ENCODE measurements at regions of chr9 and their contacts with region 1.

Region 1: DNA sequence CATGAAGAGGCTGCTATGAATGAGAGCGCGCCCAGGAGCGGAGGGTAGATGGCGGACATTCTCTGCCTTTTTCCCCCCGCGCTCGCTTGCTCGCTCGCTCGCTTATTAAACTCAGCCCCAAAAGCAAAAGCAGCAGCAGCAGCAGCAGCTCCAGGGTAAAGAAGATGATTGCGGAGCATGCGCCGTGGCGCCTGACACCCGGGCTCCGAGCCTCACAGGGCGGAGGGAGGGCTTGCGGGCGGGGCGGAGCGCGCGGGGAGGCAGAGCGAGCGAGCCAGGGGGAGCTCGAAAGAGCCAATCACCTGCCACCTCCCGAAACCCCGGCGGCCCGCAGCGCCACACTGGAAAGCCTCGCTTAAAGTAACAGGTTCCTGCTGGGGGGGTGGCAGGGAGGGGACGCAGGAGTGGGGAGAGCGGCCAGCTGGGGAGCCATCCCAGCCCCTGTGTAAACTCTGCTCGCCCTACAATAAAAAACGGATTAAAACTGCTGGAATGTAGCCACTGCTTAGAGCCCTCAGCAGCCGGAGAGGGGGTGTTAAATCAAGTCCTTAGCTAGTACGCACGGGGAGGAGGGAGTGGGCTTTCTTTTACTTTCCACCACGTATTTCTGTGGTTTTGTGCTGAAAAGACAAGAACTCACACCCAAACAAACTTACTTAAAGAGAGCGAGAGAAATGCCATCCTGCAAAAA is at the start of gene MLLT3:
- DNase-seq: peak; percentile 98
- ATAC-seq: peak; percentile 86
- H3K4me3 Mint-ChIP-seq: peak within 1 kb of the TSS; percentile 98
- H3K27ac Mint-ChIP-seq: peak within 1 kb of the TSS; percentile 99
- H3K4me1 Mint-ChIP-seq: peaks cover 36% of the 10 kb centered on the region
- H3K27me3 Mint-ChIP-seq: no peaks in the 10 kb centered on the region
- total RNA-seq, gene MLLT3: 42.5 to 49.2 TPM

Region 2: GRCh38 chr9:19976226-19976625 is 646.2 kb before region 1 on chr9:
- CTCF ChIA-PET with region 1: no interaction called
- POLR2A ChIA-PET with region 1: no interaction called
- intact Hi-C with region 1: loop called in 1 of 2 experiments (anchors 1 kb)
- DNase-seq: peak; percentile 49
- ATAC-seq: peak; percentile 96
- H3K4me3 Mint-ChIP-seq: no peak overlapping the region
- H3K27ac Mint-ChIP-seq: peak overlapping the region; percentile 88
- H3K4me1 Mint-ChIP-seq: peaks cover 25% of the 10 kb centered on the region
- H3K27me3 Mint-ChIP-seq: peaks cover 2% of the 10 kb centered on the region

Region 3: DNA sequence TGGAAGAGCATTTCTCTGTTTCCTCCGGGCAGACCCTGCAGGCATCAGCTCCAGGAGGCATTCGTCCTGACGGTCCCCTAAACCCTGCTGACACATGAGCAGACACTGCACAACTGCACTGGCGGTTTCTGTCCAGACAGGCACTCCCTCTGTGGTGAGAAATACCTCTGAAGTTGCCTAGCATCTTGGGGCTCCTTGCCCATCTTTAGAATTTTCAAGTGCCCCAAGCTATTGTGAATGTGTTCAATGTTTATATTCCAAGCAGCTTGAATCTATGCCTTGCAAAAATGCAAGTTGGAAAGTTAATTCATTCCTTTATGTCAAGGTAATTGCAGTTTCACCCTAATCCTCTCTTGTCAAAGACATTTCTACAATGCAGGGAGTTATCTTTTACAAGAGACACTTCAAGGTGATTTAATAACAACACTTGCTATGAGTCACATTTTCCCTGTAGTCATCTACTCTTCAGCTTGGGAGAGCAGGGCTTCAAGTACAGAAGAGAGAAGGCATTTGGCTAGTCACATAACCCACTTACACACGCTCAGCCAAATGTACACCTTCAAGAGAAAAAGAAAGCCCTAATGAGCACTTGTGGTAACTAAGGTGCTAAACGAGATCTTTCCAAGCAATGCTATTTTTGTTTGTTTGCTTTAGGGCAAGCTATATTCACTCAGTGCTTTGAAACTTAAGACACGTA is 302.7 kb before region 1 on chr9:
- CTCF ChIA-PET with region 1: no interaction called
- POLR2A ChIA-PET with region 1: interaction called, 3 read pairs
- intact Hi-C with region 1: loop called in 1 of 2 experiments (anchors 2 kb)
- DNase-seq: peak; percentile 52
- ATAC-seq: peak; percentile 74
- H3K4me3 Mint-ChIP-seq: no peak overlapping the region
- H3K27ac Mint-ChIP-seq: peak overlapping the region; percentile 29
- H3K4me1 Mint-ChIP-seq: peaks cover 90% of the 10 kb centered on the region
- H3K27me3 Mint-ChIP-seq: no peaks in the 10 kb centered on the region

Region 4: DNA sequence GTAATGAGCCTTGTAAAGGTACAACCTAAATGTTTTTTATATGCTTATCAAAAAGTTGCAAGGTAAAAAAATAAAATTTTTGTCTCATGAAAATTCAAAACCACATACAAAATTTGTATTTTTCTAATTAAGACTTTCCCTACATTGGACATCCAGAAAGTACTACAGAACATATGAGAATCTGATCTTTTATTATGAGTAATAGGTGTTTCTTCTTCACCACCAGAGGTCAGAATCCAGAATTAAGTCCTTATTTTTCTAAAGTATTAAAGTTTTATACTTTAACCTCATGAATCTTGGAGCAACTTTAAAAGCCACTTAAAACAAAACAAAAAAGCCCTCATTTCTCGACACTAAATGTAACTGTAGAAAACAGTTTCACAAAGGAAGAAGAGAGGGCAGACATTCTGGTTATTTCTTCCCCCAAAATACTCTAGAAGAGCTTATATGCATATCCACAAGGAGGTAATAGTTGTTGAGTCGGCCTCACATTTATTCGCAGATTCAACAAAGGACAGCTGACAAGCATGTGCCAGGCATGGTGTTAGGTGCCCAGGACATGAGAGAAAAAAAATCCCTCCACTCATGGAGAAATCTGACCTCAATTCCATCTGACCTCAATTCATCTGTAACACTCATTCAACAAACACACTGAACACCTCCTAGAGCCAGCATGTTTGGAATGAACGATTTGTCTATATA is 69.5 kb before region 1 on chr9:
- CTCF ChIA-PET with region 1: interaction called, 4 read pairs
- POLR2A ChIA-PET with region 1: interaction called, 9 read pairs
- intact Hi-C with region 1: loop called (anchors 1 to 2 kb)
- DNase-seq: no peak
- ATAC-seq: peak; percentile 37
- H3K4me3 Mint-ChIP-seq: no peak overlapping the region
- H3K27ac Mint-ChIP-seq: peak overlapping the region; percentile 28
- H3K4me1 Mint-ChIP-seq: peaks cover 68% of the 10 kb centered on the region
- H3K27me3 Mint-ChIP-seq: no peaks in the 10 kb centered on the region

Region 5: DNA sequence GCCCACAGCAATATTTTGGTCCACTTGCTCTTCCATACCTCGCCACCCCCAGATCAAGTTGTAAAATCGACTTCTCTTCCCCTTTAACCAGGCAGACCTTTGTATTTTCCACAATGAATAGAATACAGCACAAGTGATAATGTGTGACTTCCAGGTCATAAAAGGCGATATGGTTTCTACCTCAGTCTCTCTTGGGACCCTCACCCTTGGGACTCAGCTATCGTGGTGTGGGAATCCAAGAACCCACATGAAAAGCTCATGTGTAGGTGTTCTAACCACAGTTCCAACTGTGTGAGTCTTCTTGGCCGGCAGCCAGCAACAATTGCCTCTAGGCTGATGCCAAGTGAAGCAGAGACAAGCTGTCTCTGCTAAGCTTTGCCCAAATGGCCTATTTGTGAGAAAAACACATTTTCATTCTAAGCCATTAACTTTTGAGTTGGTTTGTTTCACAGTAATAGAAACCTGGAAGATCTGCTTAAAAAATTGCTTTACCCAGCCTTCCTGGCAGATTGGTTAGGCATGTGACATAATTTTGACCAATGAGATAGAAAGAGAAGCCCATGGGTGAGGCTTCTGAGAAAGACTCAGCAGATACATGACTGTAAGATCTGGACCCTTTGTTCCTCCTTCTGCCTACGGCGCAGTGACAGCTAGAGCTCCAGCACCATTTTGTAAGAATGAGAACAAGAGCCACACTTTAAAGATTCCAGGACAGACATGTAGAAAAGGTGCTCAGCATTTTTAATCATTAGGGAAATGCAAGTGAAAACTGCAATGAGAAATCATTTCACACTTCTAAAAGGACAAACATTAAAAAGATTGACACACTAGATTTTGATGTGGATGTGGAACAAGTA is 18.1 kb after region 1 on chr9:
- CTCF ChIA-PET with region 1: interaction called, 23 read pairs
- POLR2A ChIA-PET with region 1: no interaction called
- intact Hi-C with region 1: no loop called
- DNase-seq: peak; percentile 87
- ATAC-seq: peak; percentile 96
- H3K4me3 Mint-ChIP-seq: peak overlapping the region; percentile 12
- H3K27ac Mint-ChIP-seq: peak overlapping the region; percentile 52
- H3K4me1 Mint-ChIP-seq: peaks cover 15% of the 10 kb centered on the region
- H3K27me3 Mint-ChIP-seq: peaks cover 14% of the 10 kb centered on the region

Region 6: DNA sequence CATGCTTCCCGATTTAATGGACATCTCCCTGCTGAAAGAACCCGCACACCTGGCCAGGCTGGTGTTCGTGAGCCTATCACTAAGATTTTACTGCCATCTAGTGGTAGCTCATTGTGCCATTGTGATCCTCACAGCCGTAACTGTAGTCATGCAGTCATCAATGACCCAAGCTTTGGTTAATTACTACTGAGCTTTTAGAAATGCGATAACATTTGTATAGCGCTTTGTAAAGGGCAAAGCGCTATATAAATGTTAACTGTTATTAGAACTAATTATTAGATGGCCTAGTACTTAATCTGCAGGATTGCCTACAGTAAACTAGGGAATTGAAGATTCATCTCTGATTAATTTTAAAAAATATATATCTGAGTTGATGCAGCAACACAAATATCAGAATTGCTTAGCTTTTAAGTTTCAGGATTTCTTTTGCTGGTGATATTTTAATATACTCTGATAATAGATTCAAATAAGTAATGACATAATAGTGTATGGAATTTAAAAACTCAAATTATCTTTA is 318.8 kb after region 1 on chr9:
- CTCF ChIA-PET with region 1: interaction called, 74 read pairs
- POLR2A ChIA-PET with region 1: no interaction called
- intact Hi-C with region 1: loop called (anchors 1 kb)
- DNase-seq: peak; percentile 68
- ATAC-seq: peak; percentile 98
- H3K4me3 Mint-ChIP-seq: no peak overlapping the region
- H3K27ac Mint-ChIP-seq: no peak overlapping the region
- H3K4me1 Mint-ChIP-seq: peaks cover 3% of the 10 kb centered on the region
- H3K27me3 Mint-ChIP-seq: no peaks in the 10 kb centered on the region

Measured in activated CD4-positive, alpha-beta T cell treated with anti-CD3 and anti-CD28 coated beads for 36 hours (primary cell).